HepG2 (cell line): ENCODE measurements at regions of chr7 and their contacts with region 1.

Region 1: DNA sequence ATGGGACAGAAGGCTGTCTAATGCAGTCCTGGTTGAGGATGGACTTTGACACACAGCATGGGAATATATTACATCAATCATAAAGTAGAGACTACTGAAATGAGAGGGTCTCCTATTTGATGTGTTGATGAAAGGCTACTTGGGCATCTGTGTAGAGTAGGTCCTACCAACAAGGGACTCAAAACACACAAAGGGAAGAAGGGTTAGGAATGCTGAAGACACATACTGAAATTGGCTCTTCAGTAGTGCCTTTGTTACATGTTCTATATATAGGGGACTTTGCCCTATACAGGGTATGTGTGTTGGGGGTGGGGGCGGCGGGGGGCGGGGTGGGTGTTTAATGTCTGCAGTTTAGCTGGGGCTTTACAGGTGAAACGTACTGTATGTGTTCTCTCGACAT is 7.7 kb downstream of the CUL1 start:
- DNase-seq: peak; percentile 81
- ATAC-seq: peak; percentile 85
- H3K4me3 ChIP-seq: peak overlapping the region; percentile 14 to 30 (median 16); a peak in 3 of 6 replicates
- H3K27ac ChIP-seq: peak overlapping the region; percentile 57
- H3K4me1 ChIP-seq: peaks cover 72% of the 10 kb centered on the region
- H3K27me3 ChIP-seq: no peaks in the 10 kb centered on the region; a peak in 1 of 5 replicates
- CTCF ChIP-seq: no peak
- EP300 ChIP-seq: 0 out of 4 replicates have a peak, but pooled peaks of 1 of the 2 experiments have one; percentile 12
- POLR2A ChIP-seq: no peak
- RAD21 ChIP-seq: no peak

Region 2: GRCh38 chr7:148262721-148263229 is 443.6 kb before region 1 on chr7:
- CTCF ChIA-PET with region 1: no interaction called
- POLR2A ChIA-PET with region 1: no interaction called
- in situ Hi-C with region 1: no loop called
- intact Hi-C with region 1: no loop called
- DNase-seq: peak; percentile 17
- ATAC-seq: peak; percentile 94
- H3K4me3 ChIP-seq: peak overlapping the region in 1 of 3 experiments; percentile 51; a peak in 2 of 6 replicates
- H3K27ac ChIP-seq: no peak overlapping the region
- H3K4me1 ChIP-seq: no peaks in the 10 kb centered on the region
- H3K27me3 ChIP-seq: peaks cover 0 to 13% of the 10 kb centered on the region in 2 experiments; a peak in 1 of 5 replicates
- CTCF ChIP-seq: peak; percentile 92
- EP300 ChIP-seq: no peak
- POLR2A ChIP-seq: no peak
- RAD21 ChIP-seq: peak; percentile 59

Region 3: GRCh38 chr7:148664324-148664723 is 42.0 kb before region 1 on chr7:
- CTCF ChIA-PET with region 1: no interaction called
- POLR2A ChIA-PET with region 1: no interaction called
- in situ Hi-C with region 1: no loop called
- intact Hi-C with region 1: no loop called
- DNase-seq: no peak
- ATAC-seq: no peak
- H3K4me3 ChIP-seq: no peak overlapping the region
- H3K27ac ChIP-seq: no peak overlapping the region
- H3K4me1 ChIP-seq: no peaks in the 10 kb centered on the region
- H3K27me3 ChIP-seq: peaks cover 0 to 1% of the 10 kb centered on the region in 2 experiments; a peak in 2 of 5 replicates
- CTCF ChIP-seq: no peak
- EP300 ChIP-seq: no peak
- POLR2A ChIP-seq: no peak
- RAD21 ChIP-seq: no peak

Region 4: DNA sequence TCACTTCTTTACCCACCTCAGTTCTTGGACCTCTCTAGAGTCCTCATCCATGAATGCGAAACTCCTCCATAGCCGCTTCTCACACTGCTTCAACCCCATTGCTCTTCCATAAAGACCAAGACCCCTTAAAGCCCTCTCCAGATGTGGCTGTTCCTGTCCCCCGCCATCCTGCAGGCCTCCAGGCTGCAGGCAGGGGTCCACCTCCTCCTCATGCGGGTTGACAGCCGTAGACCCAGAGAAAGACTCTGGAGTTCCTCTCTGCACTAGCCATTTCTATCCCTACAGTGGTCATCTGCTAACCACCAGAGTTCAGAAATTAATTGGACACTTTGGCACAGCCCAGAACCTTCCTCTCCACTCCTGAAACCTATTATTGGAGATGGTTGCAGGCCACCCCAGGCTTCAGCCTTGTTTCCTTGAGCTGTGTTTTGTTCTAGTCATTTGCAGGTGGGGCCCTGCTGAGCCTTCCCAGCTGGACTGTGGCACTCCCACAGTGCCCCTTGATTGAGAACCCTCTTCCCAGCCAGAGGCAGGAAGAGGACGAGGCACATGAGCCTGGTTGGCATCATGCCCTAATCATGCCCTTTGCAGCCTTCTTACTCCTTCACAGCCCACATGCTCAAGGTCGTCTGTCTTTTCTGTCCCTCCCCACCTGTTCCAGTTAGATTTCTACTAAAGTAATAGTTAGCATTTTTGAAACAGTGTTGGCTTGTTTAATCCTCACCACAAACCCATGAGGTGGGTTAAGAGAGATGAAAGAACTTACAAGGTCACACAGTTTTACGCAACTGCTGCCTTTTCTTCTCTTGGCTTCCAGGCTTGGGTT is 16.2 kb after region 1 on chr7:
- CTCF ChIA-PET with region 1: no interaction called
- POLR2A ChIA-PET with region 1: interaction called, 3 read pairs
- in situ Hi-C with region 1: no loop called
- intact Hi-C with region 1: loop called (anchors 2 kb)
- DNase-seq: peak; percentile 72
- ATAC-seq: peak; percentile 80
- H3K4me3 ChIP-seq: no peak overlapping the region
- H3K27ac ChIP-seq: peak overlapping the region; percentile 35
- H3K4me1 ChIP-seq: peaks cover 58% of the 10 kb centered on the region
- H3K27me3 ChIP-seq: no peaks in the 10 kb centered on the region
- CTCF ChIP-seq: no peak
- EP300 ChIP-seq: peak in 1 of 2 experiments; percentile 32; a peak in 1 of 4 replicates
- POLR2A ChIP-seq: no peak
- RAD21 ChIP-seq: no peak

Region 5: DNA sequence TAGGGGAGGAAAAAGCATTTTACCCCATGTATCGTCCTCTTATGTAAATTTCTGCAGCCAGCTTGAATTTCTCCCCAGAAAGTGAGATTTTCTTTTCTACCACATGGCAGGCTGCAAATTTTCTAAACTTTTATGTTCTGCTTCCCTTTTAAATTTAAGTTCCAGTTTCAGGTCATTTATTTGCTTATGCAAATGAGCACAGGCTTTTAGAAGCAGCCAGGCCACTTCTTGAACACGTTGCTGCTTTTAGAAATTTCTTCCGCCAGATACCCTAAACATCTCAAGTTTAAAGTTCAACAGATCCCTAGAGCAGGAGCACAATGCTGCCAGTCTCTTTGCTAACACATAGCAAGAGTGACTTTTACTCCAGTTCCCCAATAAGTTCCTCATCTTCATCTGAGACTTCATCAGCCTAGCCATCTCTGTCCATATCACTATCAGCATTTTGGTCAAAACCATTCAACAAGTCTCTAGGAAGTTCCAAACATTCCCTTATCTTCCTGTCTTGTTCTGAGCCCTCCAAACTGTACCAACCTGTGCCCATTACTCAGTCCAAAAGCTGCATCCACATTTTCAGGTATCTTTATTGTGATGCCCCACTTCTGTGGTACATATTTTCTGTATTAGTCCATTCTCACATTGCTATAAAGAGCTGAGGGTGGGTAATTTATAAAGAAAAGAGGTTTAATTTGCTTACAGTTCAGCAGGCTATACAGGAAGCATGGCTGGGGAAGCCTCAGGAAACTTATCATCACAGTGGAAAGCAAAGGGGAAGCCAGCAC is 161.4 kb after region 1 on chr7:
- CTCF ChIA-PET with region 1: no interaction called
- POLR2A ChIA-PET with region 1: no interaction called
- in situ Hi-C with region 1: no loop called
- intact Hi-C with region 1: no loop called
- DNase-seq: no peak
- ATAC-seq: no peak
- H3K4me3 ChIP-seq: no peak overlapping the region
- H3K27ac ChIP-seq: no peak overlapping the region
- H3K4me1 ChIP-seq: peaks cover 60% of the 10 kb centered on the region
- H3K27me3 ChIP-seq: no peaks in the 10 kb centered on the region
- CTCF ChIP-seq: no peak
- EP300 ChIP-seq: no peak
- POLR2A ChIP-seq: no peak
- RAD21 ChIP-seq: no peak

Region 6: DNA sequence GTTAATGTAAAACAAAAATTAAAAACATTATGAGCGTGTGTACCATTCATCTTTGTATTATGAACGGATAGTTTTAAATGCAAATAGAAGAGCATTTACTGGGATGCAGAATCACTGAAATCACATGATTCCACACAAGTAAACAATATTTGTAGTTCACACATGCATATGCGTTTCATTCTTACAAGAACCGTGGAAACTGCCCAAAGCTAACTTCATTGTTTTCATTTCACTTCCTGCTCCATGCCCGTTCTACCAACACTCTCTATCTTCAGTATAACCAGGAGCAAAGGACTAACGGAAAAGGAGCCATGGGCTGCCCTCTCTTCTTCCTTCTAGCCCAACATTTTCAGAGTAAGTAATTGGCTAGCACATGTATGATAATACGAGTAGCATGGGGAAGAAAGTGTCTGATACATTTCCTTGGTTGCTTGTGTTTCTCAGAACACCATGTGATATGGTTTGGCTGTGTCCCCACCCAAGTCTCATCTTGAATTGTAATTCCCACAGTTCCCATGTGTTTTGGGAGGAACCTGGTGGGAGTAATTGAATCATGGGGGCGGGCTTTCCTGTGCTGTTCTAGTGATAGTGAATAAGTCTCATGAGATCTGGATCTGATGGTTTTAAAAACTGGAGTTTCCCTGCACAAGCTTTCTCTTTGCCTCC is 594.4 kb after region 1 on chr7:
- CTCF ChIA-PET with region 1: no interaction called
- POLR2A ChIA-PET with region 1: no interaction called
- in situ Hi-C with region 1: no loop called
- intact Hi-C with region 1: no loop called
- DNase-seq: no peak
- ATAC-seq: no peak
- H3K4me3 ChIP-seq: no peak overlapping the region
- H3K27ac ChIP-seq: no peak overlapping the region
- H3K4me1 ChIP-seq: no peaks in the 10 kb centered on the region
- H3K27me3 ChIP-seq: peaks cover 0 to 9% of the 10 kb centered on the region in 2 experiments; a peak in 1 of 5 replicates
- CTCF ChIP-seq: no peak
- EP300 ChIP-seq: no peak
- POLR2A ChIP-seq: no peak
- RAD21 ChIP-seq: no peak